Colonic mucosa (tissue), 4 donors: ENCODE measurements at regions of chr2 and their contacts with region 1.

Region 1: GRCh38 chr2:31170071-31170698 is 31.9 kb upstream of the GALNT14 start:
- DNase-seq: peak; percentile 42
- H3K4me3 ChIP-seq: no peak overlapping the region
- H3K27ac ChIP-seq: no peak overlapping the region
- H3K4me1 ChIP-seq: no peaks in the 10 kb centered on the region
- H3K27me3 ChIP-seq: no peaks in the 10 kb centered on the region
- CTCF ChIP-seq: peak; percentile 86

Region 2: GRCh38 chr2:30165050-30165520 is 1005.1 kb before region 1 on chr2:
- intact Hi-C with region 1: loop called (anchors 10 kb)
- DNase-seq: peak; percentile 70
- H3K4me3 ChIP-seq: no peak overlapping the region
- H3K27ac ChIP-seq: no peak overlapping the region
- H3K4me1 ChIP-seq: no peaks in the 10 kb centered on the region
- H3K27me3 ChIP-seq: no peaks in the 10 kb centered on the region
- CTCF ChIP-seq: peak; percentile 90